ENCODE measurements at regions of chr1 and their contacts with region 1.

Region 1: GRCh38 chr1:244952940-244953339 is 88.6 kb upstream of the HNRNPU start:
- DNase-seq: no peak
- H3K4me3 ChIP-seq: peak overlapping the region in 1 of 3 donors; percentile 8
- H3K27ac ChIP-seq: no peak overlapping the region
- H3K4me1 ChIP-seq: no peaks in the 10 kb centered on the region
- H3K27me3 ChIP-seq: no peaks in the 10 kb centered on the region
- CTCF ChIP-seq: no peak
- POLR2A ChIP-seq: no peak

Region 2: GRCh38 chr1:244439391-244440032 is 513.4 kb before region 1 on chr1:
- intact Hi-C with region 1: loop called (anchors 5 kb)
- DNase-seq: no peak
- H3K4me3 ChIP-seq: no peak overlapping the region
- H3K27ac ChIP-seq: no peak overlapping the region
- H3K4me1 ChIP-seq: no peaks in the 10 kb centered on the region
- H3K27me3 ChIP-seq: no peaks in the 10 kb centered on the region
- CTCF ChIP-seq: no peak
- POLR2A ChIP-seq: no peak

Region 3: DNA sequence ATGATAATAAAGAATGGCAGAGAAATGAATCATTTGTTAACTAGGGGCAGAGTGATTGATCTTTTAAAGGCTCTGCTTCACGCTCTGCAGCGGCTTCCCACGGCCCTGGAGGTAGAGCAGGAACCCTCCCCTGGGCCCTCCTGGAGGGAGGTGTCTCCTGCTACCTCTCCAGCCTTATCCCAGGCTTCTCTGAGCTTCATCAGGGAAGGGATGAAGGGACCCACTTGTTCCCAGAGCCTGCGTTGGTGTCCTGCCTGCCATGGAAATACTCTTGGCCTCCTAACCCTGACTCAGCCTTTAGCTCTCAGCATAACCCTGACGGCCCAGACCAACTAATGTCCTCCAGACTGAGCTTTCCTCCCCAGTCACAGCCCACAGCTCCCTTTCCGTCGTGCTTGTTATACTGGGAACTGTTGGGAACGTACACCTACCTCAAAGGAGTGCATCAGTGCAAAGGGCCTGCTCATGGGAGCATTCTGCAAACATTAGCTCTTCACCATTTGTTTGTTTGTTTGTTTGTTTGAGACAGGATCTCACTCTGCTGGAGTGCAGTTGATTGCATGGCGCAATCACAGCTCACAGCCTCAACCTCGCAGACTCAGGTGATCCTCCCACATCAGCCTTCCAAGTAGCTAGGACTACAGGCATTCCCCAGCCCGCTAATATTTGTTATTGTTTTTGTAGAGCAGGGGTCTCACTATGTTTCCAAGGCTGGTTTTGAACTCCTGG is 71.2 kb before region 1 on chr1:
- intact Hi-C with region 1: no loop called
- DNase-seq: no peak
- H3K4me3 ChIP-seq: no peak overlapping the region
- H3K27ac ChIP-seq: no peak overlapping the region
- H3K4me1 ChIP-seq: no peaks in the 10 kb centered on the region
- H3K27me3 ChIP-seq: no peaks in the 10 kb centered on the region
- CTCF ChIP-seq: no peak
- POLR2A ChIP-seq: no peak

Region 4: DNA sequence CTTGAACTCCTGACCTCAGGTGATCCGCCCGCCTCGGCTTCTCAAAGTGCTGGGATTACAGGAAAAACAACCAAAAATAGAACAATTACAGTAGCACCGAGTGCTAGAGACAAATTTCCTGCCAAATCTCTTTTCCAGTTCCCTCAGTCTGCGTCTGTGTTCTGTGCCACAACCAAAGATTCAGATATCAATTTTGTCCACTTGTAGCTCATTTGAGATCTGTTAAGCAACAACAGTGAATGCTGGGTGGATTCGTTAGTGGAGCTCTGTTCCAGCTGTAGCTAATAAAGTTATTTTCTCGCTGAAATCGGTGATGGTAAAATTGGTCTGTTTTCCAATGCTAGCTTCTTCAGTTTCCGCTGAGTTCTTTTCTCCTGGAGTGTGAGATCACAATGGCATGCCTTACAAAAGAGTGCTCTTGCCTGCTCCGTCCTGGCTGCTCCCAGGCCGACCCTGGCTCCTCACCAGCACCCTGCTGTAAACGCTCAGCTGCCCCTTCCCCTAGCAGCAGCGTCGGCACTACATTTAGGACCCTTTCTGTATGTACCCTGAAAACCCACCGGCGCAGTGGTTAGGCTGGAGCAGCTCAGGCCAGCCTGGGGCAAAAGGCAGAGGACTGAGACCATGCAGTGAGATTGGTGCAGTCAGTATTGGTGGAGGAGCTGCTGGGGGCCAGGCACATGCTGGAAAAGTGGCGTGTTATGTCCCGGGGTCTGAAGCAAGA is 597.2 kb after region 1 on chr1:
- intact Hi-C with region 1: no loop called
- DNase-seq: no peak
- H3K4me3 ChIP-seq: no peak overlapping the region
- H3K27ac ChIP-seq: peak overlapping the region in 1 of 2 donors; percentile 61
- H3K4me1 ChIP-seq: no peaks in the 10 kb centered on the region
- H3K27me3 ChIP-seq: no peaks in the 10 kb centered on the region
- CTCF ChIP-seq: no peak
- POLR2A ChIP-seq: no peak